Kidney (tissue), 22 donors: ENCODE measurements at regions of chr3 and their contacts with region 1.

Region 1: DNA sequence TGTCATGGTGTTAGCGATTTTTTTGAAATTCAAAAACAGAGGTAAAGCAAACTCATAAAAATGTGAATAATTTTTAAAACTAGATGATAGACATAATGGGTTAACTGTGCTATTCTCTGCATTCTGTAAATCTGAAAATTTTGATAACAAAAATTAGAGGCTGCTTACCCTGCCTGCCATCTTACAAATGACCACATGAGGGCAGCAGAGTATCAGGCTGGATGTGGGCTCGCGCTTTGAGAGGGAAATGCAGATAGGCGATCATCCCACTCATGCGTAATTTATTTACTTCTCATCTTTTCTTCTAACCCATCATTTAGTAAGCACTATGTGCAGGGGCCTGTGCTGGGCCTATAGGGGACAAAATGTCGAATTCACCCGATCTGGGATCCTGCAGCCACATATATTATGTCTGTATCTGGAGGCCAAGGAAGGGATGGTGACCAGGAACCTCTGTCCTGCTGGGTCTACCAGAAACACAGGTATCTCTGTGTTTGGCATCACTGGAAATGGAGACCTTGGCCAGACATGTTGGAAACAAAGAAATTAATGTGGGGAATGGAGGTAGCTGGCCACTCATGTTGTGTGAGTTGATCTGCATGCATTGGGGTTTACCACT is 7.8 kb upstream of the RAD18 start:
- DNase-seq: peak in 4 of 5 donors; percentile 66 to 81 (median 72)
- H3K4me3 ChIP-seq: no peak overlapping the region
- H3K27ac ChIP-seq: no peak overlapping the region
- H3K4me1 ChIP-seq: no peaks in the 10 kb centered on the region
- H3K27me3 ChIP-seq: no peaks in the 10 kb centered on the region
- CTCF ChIP-seq: peak; percentile 96

Region 2: GRCh38 chr3:9302425-9303181 is 331.5 kb after region 1 on chr3:
- intact Hi-C with region 1: loop called (anchors 5 kb)
- DNase-seq: peak; percentile 92 to 95 (median 94)
- H3K4me3 ChIP-seq: peak overlapping the region in 2 of 3 donors; percentile 46 to 52
- H3K27ac ChIP-seq: no peak overlapping the region
- H3K4me1 ChIP-seq: peaks cover 0 to 3% (median 0%) of the 10 kb centered on the region in 3 donors
- H3K27me3 ChIP-seq: no peaks in the 10 kb centered on the region
- CTCF ChIP-seq: peak; percentile 92